ENCODE measurements at regions of chr15 and their contacts with region 1.

Region 1: DNA sequence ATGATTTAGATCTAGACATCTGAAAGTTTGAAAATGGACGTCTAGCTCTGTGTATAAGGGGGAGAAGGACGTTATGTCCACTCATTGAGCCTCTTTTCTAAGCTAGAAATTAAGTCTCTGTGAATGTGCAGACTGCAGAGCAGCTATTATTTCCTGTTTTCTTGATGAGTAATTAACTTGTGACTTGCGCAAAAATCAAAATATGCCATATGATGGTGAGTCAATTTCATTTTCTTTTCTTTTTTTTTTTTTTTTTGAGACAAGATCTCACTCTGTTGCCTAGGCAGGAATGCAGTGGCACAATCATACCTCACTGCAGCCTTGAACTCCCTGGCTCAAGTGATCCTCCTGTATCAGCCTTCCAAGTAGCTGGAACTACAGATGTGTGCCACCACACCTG is 14.1 kb downstream of the LACTB start:
- DNase-seq: peak; percentile 64
- H3K27ac ChIP-seq: peak overlapping the region; percentile 83
- CTCF ChIP-seq: no peak

Region 2: GRCh38 chr15:62223020-62223419 is 912.8 kb before region 1 on chr15:
- CTCF ChIA-PET with region 1: no interaction called
- POLR2A ChIA-PET with region 1: no interaction called
- DNase-seq: no peak
- H3K27ac ChIP-seq: no peak overlapping the region
- CTCF ChIP-seq: no peak

Region 3: DNA sequence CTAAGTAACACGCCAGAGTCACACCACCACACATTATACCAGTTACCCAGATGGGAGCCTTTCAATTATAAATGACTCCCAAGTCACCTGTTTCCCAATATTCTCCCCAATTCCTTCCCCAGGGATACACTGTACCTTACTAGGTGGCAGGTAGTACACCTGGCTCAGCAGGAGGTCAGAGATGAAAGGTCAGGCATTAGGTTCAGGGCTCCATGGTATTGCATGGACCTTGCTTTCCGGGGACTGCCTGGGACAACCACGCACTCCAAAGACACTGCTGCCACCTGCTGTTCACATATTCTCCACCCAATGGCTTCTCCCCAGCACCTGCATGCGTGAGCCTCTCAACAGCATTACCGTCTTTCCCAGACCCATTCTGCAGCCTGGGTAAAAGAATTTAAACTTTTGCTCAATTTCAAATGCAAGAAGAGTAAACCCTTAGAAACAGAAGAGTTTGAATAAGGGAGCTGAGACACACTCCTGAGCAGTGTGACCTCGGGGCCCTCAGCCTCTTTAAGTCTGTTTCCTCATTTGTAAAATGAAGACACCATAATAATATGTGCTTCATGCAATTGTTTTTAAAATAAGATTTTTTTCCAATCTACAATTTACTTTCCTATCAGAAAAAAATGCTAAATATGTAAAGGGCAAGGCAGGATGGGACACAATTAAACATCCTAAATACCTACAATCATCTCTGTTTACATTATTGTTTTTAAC is 42.2 kb before region 1 on chr15:
- CTCF ChIA-PET with region 1: no interaction called
- POLR2A ChIA-PET with region 1: no interaction called
- DNase-seq: peak; percentile 70
- H3K27ac ChIP-seq: no peak overlapping the region
- CTCF ChIP-seq: peak; percentile 95

Region 4: GRCh38 chr15:63151665-63152064 is 15.9 kb after region 1 on chr15:
- CTCF ChIA-PET with region 1: interaction called, 12 read pairs
- POLR2A ChIA-PET with region 1: no interaction called
- DNase-seq: no peak
- H3K27ac ChIP-seq: no peak overlapping the region
- CTCF ChIP-seq: no peak

Region 5: GRCh38 chr15:63338170-63338569 is 202.4 kb after region 1 on chr15:
- CTCF ChIA-PET with region 1: no interaction called
- POLR2A ChIA-PET with region 1: no interaction called
- DNase-seq: peak; percentile 44
- H3K27ac ChIP-seq: peak overlapping the region; percentile 4; the same call in 1 of the 2 replicates
- CTCF ChIP-seq: no peak